ENCODE measurements at regions of chr14 and their contacts with region 1.

Region 1: DNA sequence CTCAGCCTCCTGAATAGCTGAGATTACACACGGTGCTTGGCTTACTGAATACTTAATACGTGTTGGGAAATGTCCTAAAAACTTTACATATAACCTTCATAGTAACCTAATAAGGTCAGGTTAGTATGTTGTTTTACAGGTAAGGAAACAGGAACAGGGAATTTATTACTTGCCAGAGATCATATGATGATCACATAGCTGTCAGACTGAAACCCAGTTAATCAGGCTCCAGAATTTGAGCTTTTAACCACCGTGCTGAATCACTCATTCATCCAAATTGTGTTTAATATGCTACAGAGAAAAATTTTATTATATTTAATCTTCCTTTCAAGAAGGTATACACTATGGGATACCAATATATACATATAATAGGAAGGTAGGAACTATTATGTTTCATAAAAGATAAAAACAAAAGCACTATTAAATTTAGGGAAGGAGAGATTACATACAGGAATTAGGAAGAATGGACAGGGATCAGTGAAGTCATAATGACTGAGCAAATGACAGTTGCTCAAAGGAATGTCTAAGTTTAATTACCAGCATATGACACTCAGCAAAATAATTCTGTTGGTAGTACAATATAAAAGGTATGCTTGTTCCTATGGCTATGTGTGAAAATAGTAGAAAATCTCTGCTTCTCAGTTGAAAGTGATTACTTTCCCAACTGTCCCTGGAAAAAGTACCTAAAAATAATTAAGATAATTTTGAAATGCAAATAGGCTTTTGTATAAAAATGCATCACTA is 59.3 kb downstream of the HEATR5A start:
- DNase-seq: no peak
- H3K4me3 Mint-ChIP-seq: no peak overlapping the region
- H3K27ac Mint-ChIP-seq: no peak overlapping the region
- H3K4me1 Mint-ChIP-seq: no peaks in the 10 kb centered on the region
- H3K27me3 Mint-ChIP-seq: no peaks in the 10 kb centered on the region

Region 2: DNA sequence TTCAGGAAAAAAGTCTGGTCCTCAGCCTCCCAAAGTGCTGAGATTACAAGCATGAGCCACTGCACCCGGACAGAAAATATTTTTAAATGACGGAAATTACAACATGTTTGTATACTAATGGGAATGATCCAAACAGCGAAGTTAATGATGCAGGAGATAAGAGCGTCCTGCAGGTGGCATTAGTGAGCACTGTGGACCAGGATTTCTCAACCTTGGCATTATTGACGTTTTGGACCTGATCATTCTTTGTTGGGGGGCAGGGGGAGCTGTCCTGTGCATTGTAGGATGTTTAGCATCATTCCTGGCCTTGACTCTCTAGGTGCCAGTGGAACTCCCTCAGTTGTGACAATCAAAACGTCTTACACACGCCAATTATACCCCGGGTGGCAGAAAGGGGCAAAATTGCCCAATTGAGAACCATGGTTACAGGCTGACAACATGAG is 704.9 kb before region 1 on chr14:
- intact Hi-C with region 1: loop called (anchors 5 kb)
- DNase-seq: peak; percentile 72
- H3K4me3 Mint-ChIP-seq: no peak overlapping the region
- H3K27ac Mint-ChIP-seq: no peak overlapping the region
- H3K4me1 Mint-ChIP-seq: no peaks in the 10 kb centered on the region
- H3K27me3 Mint-ChIP-seq: no peaks in the 10 kb centered on the region

Region 3: GRCh38 chr14:30803185-30803584 is 557.9 kb before region 1 on chr14:
- intact Hi-C with region 1: no loop called
- DNase-seq: no peak
- H3K4me3 Mint-ChIP-seq: no peak overlapping the region
- H3K27ac Mint-ChIP-seq: no peak overlapping the region
- H3K4me1 Mint-ChIP-seq: no peaks in the 10 kb centered on the region
- H3K27me3 Mint-ChIP-seq: peaks cover 13% of the 10 kb centered on the region

Region 4: DNA sequence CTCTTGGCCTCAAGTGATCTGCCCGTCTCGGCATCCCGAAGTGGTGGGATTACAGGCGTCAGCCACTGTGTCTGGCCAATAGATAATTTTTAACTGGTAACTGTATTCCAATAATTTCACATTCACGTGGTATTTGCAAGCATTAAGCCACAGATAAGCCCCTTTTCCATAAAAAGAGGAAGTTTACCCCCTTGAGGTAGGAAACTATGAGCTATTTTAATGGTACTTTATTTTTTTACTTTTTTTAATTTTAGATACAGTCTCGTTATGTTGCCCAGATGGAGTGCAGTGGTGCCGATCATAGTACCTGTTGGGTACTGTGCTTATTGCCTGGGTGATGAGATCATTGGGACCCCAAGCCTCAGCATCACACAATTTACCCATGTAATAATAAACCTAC is 378.6 kb before region 1 on chr14:
- intact Hi-C with region 1: loop called (anchors 5 kb)
- DNase-seq: no peak
- H3K4me3 Mint-ChIP-seq: no peak overlapping the region
- H3K27ac Mint-ChIP-seq: no peak overlapping the region
- H3K4me1 Mint-ChIP-seq: peaks cover 5% of the 10 kb centered on the region
- H3K27me3 Mint-ChIP-seq: no peaks in the 10 kb centered on the region

Region 5: DNA sequence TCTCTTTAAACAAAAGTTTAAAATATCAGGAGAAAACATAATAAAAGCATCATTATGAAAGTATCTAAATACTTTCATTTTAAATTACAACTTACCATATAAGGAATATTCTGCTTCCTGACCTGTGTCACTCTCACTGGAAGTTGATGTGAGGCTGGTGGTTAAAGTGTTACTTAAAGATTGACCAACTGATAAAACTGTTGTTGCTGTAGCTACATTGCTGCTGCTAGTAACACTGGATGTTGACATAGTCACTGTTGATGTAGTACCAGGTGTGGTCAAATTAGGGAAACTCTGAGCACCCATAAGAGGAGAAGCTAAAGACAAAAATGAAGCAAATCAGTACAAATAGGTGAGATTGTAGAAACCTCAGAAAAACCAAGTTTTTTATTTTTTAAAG is 233.4 kb before region 1 on chr14:
- intact Hi-C with region 1: loop called (anchors 10 kb)
- DNase-seq: peak; percentile 88
- H3K4me3 Mint-ChIP-seq: peak overlapping the region; percentile 14
- H3K27ac Mint-ChIP-seq: peak overlapping the region; percentile 59
- H3K4me1 Mint-ChIP-seq: peaks cover 31% of the 10 kb centered on the region
- H3K27me3 Mint-ChIP-seq: no peaks in the 10 kb centered on the region

Region 6: DNA sequence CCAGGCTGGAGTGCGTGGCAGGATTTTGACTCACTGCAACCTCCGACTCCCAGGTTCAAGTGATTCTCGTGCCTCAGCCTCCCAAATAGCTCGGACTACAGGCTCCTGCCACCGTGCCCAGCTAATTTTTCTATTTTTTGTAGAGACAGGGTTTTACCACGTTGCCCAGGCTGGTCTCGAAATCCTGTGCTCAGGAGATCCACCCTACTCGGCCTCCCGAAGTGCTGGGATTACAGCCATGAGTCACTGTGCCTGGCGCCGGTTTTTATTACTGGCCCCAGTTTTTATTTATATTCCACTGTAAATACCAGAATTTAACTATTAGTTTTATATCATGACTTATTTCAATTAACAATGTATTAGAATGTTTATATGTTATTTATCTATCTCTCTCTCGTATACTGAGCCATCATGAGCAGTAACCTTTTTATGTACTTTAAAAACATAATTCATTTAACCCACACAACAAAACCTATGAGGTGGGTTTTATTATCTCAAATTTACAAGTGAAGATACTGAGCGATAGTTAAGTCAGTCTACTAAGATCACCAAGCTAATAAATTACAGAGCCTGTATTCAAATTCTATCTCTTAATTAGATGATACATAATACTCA is 201.3 kb before region 1 on chr14:
- intact Hi-C with region 1: loop called (anchors 10 kb)
- DNase-seq: peak; percentile 36
- H3K4me3 Mint-ChIP-seq: no peak overlapping the region
- H3K27ac Mint-ChIP-seq: no peak overlapping the region
- H3K4me1 Mint-ChIP-seq: no peaks in the 10 kb centered on the region
- H3K27me3 Mint-ChIP-seq: no peaks in the 10 kb centered on the region

Region 7: GRCh38 chr14:31270196-31270772 is 90.8 kb before region 1 on chr14:
- intact Hi-C with region 1: loop called (anchors 1 kb)
- DNase-seq: peak; percentile 68
- H3K4me3 Mint-ChIP-seq: no peak overlapping the region
- H3K27ac Mint-ChIP-seq: no peak overlapping the region
- H3K4me1 Mint-ChIP-seq: peaks cover 5% of the 10 kb centered on the region
- H3K27me3 Mint-ChIP-seq: no peaks in the 10 kb centered on the region

Region 8: GRCh38 chr14:31430634-31431264 is 69.7 kb after region 1 on chr14:
- intact Hi-C with region 1: no loop called
- DNase-seq: no peak
- H3K4me3 Mint-ChIP-seq: no peak overlapping the region
- H3K27ac Mint-ChIP-seq: peak overlapping the region; percentile 21
- H3K4me1 Mint-ChIP-seq: peaks cover 8% of the 10 kb centered on the region
- H3K27me3 Mint-ChIP-seq: no peaks in the 10 kb centered on the region

Measured in activated CD4-positive, alpha-beta T cell treated with anti-CD3 and anti-CD28 coated beads, Interleukin-2, amount 10 ng/mL, durations not matched to agents 24 days and 14 days (primary cell).